ENCODE measurements at regions of chr17 and their contacts with region 1.

Region 1: DNA sequence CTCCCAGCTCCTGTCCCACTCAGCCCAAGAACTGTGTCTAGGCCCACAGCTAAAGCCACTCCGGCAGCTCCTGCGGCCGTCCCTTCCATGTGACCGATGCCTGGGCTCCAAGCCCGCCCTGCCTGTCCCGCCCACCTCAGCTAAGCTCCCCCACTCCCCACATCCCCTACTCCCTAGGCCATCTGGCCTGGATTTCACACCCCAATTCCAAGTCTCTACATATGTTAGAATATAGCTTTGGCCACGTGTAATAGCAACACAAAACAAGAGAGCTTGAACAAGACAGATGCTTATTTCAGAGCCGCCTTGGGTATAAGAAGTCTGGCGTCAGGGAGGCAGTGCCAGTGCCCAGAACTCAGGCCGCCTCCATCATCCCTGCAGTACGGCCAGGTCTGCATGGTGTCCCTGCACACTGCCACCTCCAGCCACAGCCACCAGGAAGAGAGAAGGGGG is 30.0 kb upstream of the USP22 start:
- DNase-seq: no peak

Region 2: GRCh38 chr17:21043286-21044232 is 29.2 kb before region 1 on chr17:
- intact Hi-C with region 1: loop called in 1 of 2 experiments (anchors 1 kb)
- DNase-seq: peak; percentile 99